ENCODE measurements at regions of chr1 and their contacts with region 1.

Region 1: GRCh38 chr1:115807723-115808122 is 33.2 kb downstream of the NHLH2 start:
- DNase-seq: no peak
- ATAC-seq: peak in 2 of 4 donors; percentile 57 to 69
- H3K4me3 ChIP-seq: no peak overlapping the region
- H3K27ac ChIP-seq: no peak overlapping the region
- H3K4me1 ChIP-seq: no peaks in the 10 kb centered on the region
- H3K27me3 ChIP-seq: no peaks in the 10 kb centered on the region
- CTCF ChIP-seq: peak; percentile 58

Region 2: DNA sequence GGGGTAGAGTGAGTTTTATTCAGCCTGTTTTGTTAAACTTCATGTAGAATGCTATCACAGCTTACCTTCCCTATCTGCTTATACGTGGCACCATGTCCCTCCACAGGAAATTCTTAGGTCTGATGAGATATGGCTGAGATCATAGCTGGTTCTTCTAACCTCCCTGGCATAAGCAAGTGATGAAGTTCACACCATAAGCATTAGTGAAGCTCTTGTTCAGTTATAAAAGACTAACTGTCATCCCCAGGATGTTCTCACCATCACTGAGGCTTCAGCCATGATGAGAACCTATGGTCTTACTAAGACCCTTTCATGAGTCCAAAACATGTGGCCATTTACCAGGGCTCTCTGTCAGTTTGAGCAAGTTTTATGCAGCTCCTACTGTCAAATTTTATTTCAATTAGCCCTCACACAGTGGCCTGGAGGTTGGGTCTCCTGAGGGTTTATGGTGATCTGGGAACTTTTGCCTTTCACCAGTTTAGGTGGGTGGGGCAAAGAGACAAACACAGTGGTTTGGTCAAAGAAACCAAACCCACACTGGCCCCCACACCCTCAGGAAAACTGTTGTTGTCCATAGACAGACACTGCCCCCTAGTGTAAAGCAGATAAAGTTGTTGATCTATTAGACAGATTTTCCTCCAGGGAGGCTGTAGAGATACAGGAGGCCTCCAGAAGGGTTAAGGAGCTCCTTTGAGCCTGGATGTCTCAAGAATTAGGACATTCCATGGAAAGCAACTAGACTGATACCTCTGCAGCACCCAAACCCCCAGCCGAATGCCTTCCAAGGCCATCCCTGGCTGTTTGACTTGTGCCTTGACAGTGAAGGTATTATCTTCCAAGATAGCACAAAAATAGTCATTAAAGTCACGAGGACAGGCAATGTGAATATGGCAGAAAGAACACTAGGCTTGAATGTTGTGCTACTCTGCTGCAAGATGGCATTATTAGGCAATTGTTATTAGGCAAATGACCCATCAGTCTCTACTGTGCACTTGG is 173.6 kb after region 1 on chr1:
- intact Hi-C with region 1: loop called (anchors 2 to 5 kb)
- DNase-seq: no peak
- ATAC-seq: peak in 2 of 4 donors; percentile 46 to 53
- H3K4me3 ChIP-seq: no peak overlapping the region
- H3K27ac ChIP-seq: no peak overlapping the region
- H3K4me1 ChIP-seq: no peaks in the 10 kb centered on the region
- H3K27me3 ChIP-seq: peaks cover 3 to 18% (median 10%) of the 10 kb centered on the region in 3 donors
- CTCF ChIP-seq: peak; percentile 39

Region 3: GRCh38 chr1:116020668-116021275 is 213.0 kb after region 1 on chr1:
- intact Hi-C with region 1: loop called in 1 of 2 experiments (anchors 10 kb)
- DNase-seq: peak in 1 of 2 donors; percentile 28
- ATAC-seq: no peak
- H3K4me3 ChIP-seq: no peak overlapping the region
- H3K27ac ChIP-seq: no peak overlapping the region
- H3K4me1 ChIP-seq: no peaks in the 10 kb centered on the region
- H3K27me3 ChIP-seq: no peaks in the 10 kb centered on the region
- CTCF ChIP-seq: peak; percentile 19

Measured in psoas muscle (tissue), 8 donors.